Activated T-helper 1 cell treated with anti-CD3 and anti-CD28 coated beads, Interleukin-12 subunit alpha, Interleukin-12 subunit beta, Interleukin-2, Interleukin-4 antibody, amounts not matched to agents 30 ng/mL and 10 ng/mL and 1 ng/mL, durations not matched to agents 14 hours and 24 hours and 36 hours (primary cell): ENCODE measurements at regions of chr4 and their contacts with region 1.

Region 1: GRCh38 chr4:184575306-184575705 is 73.9 kb downstream of the CASP3 start:
- DNase-seq: no peak
- H3K4me3 Mint-ChIP-seq: no peak overlapping the region
- H3K27ac Mint-ChIP-seq: peak overlapping the region; percentile 55
- H3K4me1 Mint-ChIP-seq: peaks cover 19% of the 10 kb centered on the region
- H3K27me3 Mint-ChIP-seq: no peaks in the 10 kb centered on the region

Region 2: GRCh38 chr4:184624972-184625554 is 49.8 kb after region 1 on chr4:
- intact Hi-C with region 1: loop called (anchors 2 kb)
- DNase-seq: no peak
- H3K4me3 Mint-ChIP-seq: peak overlapping the region; percentile 49
- H3K27ac Mint-ChIP-seq: peak overlapping the region; percentile 88
- H3K4me1 Mint-ChIP-seq: peaks cover 38% of the 10 kb centered on the region
- H3K27me3 Mint-ChIP-seq: no peaks in the 10 kb centered on the region